Ovary (tissue), 10 donors: ENCODE measurements at regions of chr18 and their contacts with region 1.

Region 1: GRCh38 chr18:32092422-32093101 is 888 bp downstream of the RNF138 start:
- DNase-seq: peak; percentile 99 to 100 (median 100)
- H3K4me3 ChIP-seq: peak overlapping the region; percentile 65
- H3K27ac ChIP-seq: peak overlapping the region; percentile 87 to 99
- H3K4me1 ChIP-seq: peaks cover 2% of the 10 kb centered on the region
- H3K27me3 ChIP-seq: no peaks in the 10 kb centered on the region
- CTCF ChIP-seq: no peak
- EP300 ChIP-seq: no peak
- POLR2A ChIP-seq: peak; percentile 59

Region 2: GRCh38 chr18:31942999-31943865 is 149.3 kb before region 1 on chr18 and contains the start of gene TRAPPC8:
- intact Hi-C with region 1: loop called in 1 of 4 experiments (anchors 5 kb)
- DNase-seq: peak; percentile 96 to 98 (median 97)
- H3K4me3 ChIP-seq: peak within 1 kb of the TSS; percentile 62
- H3K27ac ChIP-seq: peak within 1 kb of the TSS; percentile 54 to 75
- H3K4me1 ChIP-seq: peaks cover 2% of the 10 kb centered on the region
- H3K27me3 ChIP-seq: no peaks in the 10 kb centered on the region
- CTCF ChIP-seq: no peak
- EP300 ChIP-seq: no peak
- POLR2A ChIP-seq: no peak
- total RNA-seq, gene TRAPPC8: 23.1 to 47.1 (median 33.1) TPM

Region 3: DNA sequence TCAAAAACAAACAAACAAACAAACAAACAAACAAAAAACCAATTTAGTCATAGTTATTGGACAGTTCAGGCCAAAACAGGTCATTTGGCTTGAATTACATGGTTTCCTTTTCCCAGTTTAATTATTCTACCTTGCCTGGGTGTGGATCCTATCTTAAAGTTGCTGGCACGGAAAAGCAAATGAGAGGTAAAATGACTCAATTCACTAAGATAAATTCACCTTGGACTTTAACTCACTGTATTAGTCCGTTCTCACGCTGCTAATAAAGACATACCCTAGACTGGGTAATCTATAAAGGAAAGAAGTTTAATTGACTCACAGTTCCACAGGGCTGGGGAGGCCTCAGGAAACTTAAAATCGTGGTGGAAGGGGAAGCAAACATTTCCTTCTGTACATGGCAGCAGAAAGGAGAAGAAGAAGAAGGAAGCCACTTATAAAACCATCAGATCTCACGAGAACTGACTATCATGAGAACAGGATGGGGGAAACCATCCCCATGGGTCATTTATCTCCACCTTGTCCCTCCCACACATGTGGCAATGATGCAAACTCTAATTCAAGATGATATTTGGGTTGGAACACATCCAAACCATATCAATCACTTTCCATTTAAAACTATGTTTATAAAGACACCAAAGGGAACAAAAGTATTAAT is 127.1 kb before region 1 on chr18:
- intact Hi-C with region 1: no loop called
- DNase-seq: no peak
- H3K4me3 ChIP-seq: no peak overlapping the region
- H3K27ac ChIP-seq: no peak overlapping the region
- H3K4me1 ChIP-seq: no peaks in the 10 kb centered on the region
- H3K27me3 ChIP-seq: no peaks in the 10 kb centered on the region
- CTCF ChIP-seq: no peak
- EP300 ChIP-seq: no peak
- POLR2A ChIP-seq: no peak

Region 4: DNA sequence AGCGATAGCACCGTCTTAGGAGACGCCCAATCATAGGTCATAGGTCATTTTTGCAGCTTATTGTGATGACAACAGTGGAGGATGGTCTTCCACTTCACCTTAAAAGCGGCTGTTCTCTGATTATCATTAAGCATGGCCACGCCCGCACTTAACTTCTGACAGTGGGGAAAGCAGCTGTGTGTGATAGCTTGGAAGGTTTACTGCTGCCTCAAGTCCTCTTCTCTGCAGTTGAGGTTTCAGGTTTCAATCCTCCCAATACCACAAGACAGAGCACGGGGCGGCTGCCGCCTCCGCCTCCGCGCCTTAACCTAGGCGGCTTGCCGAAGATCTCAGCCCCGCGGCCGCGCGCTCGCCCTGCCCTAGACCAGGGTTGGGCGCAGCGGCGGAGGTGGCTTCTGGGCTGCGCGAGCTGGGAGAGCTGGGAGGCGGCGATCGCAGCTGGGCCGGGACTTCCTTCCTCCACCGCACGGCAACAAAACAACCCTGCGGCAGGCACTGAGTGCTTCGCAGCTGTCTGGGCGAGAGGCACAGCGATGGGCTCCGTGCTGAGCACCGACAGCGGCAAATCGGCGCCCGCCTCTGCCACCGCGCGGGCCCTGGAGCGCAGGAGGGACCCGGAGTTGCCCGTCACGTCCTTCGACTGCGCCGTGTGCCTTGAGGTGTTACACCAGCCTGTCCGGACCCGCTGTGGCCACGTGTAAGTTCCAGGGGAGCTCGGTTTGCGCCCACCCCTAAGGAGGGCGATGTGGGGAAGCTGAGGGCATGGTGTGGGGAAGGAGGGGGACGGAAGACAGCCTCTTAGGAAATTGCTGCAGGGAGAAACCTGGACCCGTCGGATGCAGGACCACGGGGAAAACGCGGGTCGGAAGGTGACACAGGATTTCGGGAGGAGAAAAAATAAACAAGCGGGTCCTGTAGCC is 74.0 kb before region 1 on chr18 and contains the start of gene RNF125:
- intact Hi-C with region 1: loop called in 1 of 4 experiments (anchors 2 kb)
- DNase-seq: peak; percentile 52 to 80 (median 59)
- H3K4me3 ChIP-seq: peak within 1 kb of the TSS; percentile 46
- H3K27ac ChIP-seq: peak within 1 kb of the TSS in 1 of 2 donors; percentile 47
- H3K4me1 ChIP-seq: no peaks in the 10 kb centered on the region
- H3K27me3 ChIP-seq: no peaks in the 10 kb centered on the region
- CTCF ChIP-seq: no peak
- EP300 ChIP-seq: no peak
- POLR2A ChIP-seq: peak; percentile 14
- total RNA-seq, gene RNF125: 0.86 to 4.9 (median 1.9) TPM